ENCODE measurements at regions of chr5 and their contacts with region 1.

Region 1: GRCh38 chr5:181190689-181191528 is 14.1 kb downstream of the TRIM7 start:
- DNase-seq: no peak
- H3K4me3 ChIP-seq: peak overlapping the region; percentile 62 to 90
- H3K27ac ChIP-seq: peak overlapping the region; percentile 86 to 95
- H3K4me1 ChIP-seq: peaks cover 7% of the 10 kb centered on the region
- H3K27me3 ChIP-seq: no peaks in the 10 kb centered on the region
- CTCF ChIP-seq: peak in 1 of 4 experiments; percentile 13
- POLR2A ChIP-seq: no peak

Region 2: GRCh38 chr5:181207214-181208107 is 16.6 kb after region 1 on chr5:
- intact Hi-C with region 1: loop called (anchors 1 kb)
- DNase-seq: no peak
- H3K4me3 ChIP-seq: peak overlapping the region; percentile 53 to 60
- H3K27ac ChIP-seq: peak overlapping the region; percentile 68 to 69
- H3K4me1 ChIP-seq: peaks cover 14% of the 10 kb centered on the region
- H3K27me3 ChIP-seq: no peaks in the 10 kb centered on the region
- CTCF ChIP-seq: no peak
- POLR2A ChIP-seq: no peak

Region 3: DNA sequence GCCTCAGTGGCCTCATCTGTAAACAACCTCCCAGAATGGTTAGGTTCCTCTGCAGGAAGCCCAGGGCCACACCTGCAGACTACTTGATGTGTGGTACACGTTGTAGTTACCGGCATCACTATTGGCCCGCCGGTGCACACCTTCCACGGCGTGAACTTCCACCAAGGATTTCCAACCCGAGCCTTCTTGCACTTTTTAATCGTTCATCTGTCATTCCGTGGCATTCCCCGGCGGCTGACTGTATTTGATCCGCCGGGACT is 26.8 kb after region 1 on chr5:
- intact Hi-C with region 1: loop called (anchors 1 kb)
- DNase-seq: no peak
- H3K4me3 ChIP-seq: peak overlapping the region; percentile 29 to 30
- H3K27ac ChIP-seq: peak overlapping the region; percentile 59 to 60
- H3K4me1 ChIP-seq: no peaks in the 10 kb centered on the region
- H3K27me3 ChIP-seq: no peaks in the 10 kb centered on the region
- CTCF ChIP-seq: no peak
- POLR2A ChIP-seq: no peak

Measured in prostate gland (tissue), 2 donors.